ENCODE measurements at regions of chr2 and their contacts with region 1.

Region 1: DNA sequence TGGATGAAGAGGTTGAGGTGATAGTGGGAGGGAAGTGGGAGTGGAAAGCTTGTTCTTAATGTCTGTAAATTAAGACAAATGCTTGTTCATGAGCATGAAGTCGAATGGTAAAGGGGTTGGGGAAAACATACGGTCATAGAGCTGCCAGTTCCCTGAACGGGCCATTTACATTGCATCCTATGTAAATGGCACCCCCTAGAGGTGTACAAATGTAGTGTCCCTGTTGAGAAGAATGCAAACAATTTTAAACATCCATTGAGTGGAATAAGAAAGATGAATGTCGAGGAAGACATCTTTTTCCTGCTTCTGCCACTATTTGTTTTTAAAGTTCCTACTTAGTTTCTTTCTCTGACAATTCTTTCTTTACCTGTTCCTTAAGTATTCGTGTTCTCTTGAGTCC is 155.7 kb downstream of the RDH14 start:
- DNase-seq: no peak
- ATAC-seq: peak; percentile 57
- H3K4me3 ChIP-seq: no peak overlapping the region
- H3K27ac ChIP-seq: no peak overlapping the region
- H3K4me1 ChIP-seq: no peaks in the 10 kb centered on the region
- H3K27me3 ChIP-seq: no peaks in the 10 kb centered on the region
- CTCF ChIP-seq: peak in 2 of 3 experiments; percentile 29 to 40; a peak in 3 of 6 replicates
- EP300 ChIP-seq: no peak
- POLR2A ChIP-seq: no peak
- RAD21 ChIP-seq: no peak

Region 2: GRCh38 chr2:18349421-18349820 is 55.3 kb before region 1 on chr2:
- CTCF ChIA-PET with region 1: no interaction called
- POLR2A ChIA-PET with region 1: no interaction called
- RAD21 ChIA-PET with region 1: no interaction called
- SMC1A ChIA-PET with region 1: no interaction called
- in situ Hi-C with region 1: no loop called
- intact Hi-C with region 1: no loop called
- DNase-seq: no peak
- ATAC-seq: no peak
- H3K4me3 ChIP-seq: no peak overlapping the region
- H3K27ac ChIP-seq: no peak overlapping the region
- H3K4me1 ChIP-seq: no peaks in the 10 kb centered on the region
- H3K27me3 ChIP-seq: no peaks in the 10 kb centered on the region
- CTCF ChIP-seq: no peak
- EP300 ChIP-seq: no peak
- POLR2A ChIP-seq: no peak
- RAD21 ChIP-seq: no peak

Region 3: GRCh38 chr2:18378020-18378653 is 26.6 kb before region 1 on chr2:
- CTCF ChIA-PET with region 1: interaction called, 10 read pairs
- POLR2A ChIA-PET with region 1: no interaction called
- RAD21 ChIA-PET with region 1: no interaction called
- SMC1A ChIA-PET with region 1: interaction called, 3 read pairs
- in situ Hi-C with region 1: no loop called
- intact Hi-C with region 1: no loop called
- DNase-seq: no peak
- ATAC-seq: peak; percentile 86
- H3K4me3 ChIP-seq: no peak overlapping the region
- H3K27ac ChIP-seq: no peak overlapping the region
- H3K4me1 ChIP-seq: no peaks in the 10 kb centered on the region
- H3K27me3 ChIP-seq: peaks cover 0 to 3% of the 10 kb centered on the region in 2 experiments; a peak in 1 of 4 replicates
- CTCF ChIP-seq: peak; percentile 62 to 79 (median 75)
- EP300 ChIP-seq: no peak
- POLR2A ChIP-seq: no peak
- RAD21 ChIP-seq: peak; percentile 58

Region 4: GRCh38 chr2:18387441-18388206 is 17.1 kb before region 1 on chr2:
- CTCF ChIA-PET with region 1: interaction called, 16 read pairs
- POLR2A ChIA-PET with region 1: no interaction called
- RAD21 ChIA-PET with region 1: no interaction called
- SMC1A ChIA-PET with region 1: no interaction called
- in situ Hi-C with region 1: no loop called
- intact Hi-C with region 1: no loop called
- DNase-seq: peak; percentile 23
- ATAC-seq: peak; percentile 97
- H3K4me3 ChIP-seq: no peak overlapping the region
- H3K27ac ChIP-seq: no peak overlapping the region
- H3K4me1 ChIP-seq: no peaks in the 10 kb centered on the region
- H3K27me3 ChIP-seq: peaks cover 0 to 1% of the 10 kb centered on the region in 2 experiments; a peak in 1 of 4 replicates
- CTCF ChIP-seq: peak; percentile 84 to 94 (median 93)
- EP300 ChIP-seq: no peak
- POLR2A ChIP-seq: no peak
- RAD21 ChIP-seq: peak; percentile 54

Measured in GM12878 (cell line).